AG04449 (cell line): ENCODE measurements at regions of chr15 and their contacts with region 1.

Region 1: GRCh38 chr15:57306161-57306943 is 70.0 kb upstream of the CGNL1 start:
- DNase-seq: no peak
- H3K4me3 ChIP-seq: peak overlapping the region; percentile 58
- CTCF ChIP-seq: peak; percentile 91

Region 2: GRCh38 chr15:56491110-56491722 is 815.1 kb before region 1 on chr15:
- CTCF ChIA-PET with region 1: interaction called, 34 read pairs
- POLR2A ChIA-PET with region 1: no interaction called
- DNase-seq: peak; percentile 36
- H3K4me3 ChIP-seq: no peak overlapping the region
- CTCF ChIP-seq: peak; percentile 91

Region 3: DNA sequence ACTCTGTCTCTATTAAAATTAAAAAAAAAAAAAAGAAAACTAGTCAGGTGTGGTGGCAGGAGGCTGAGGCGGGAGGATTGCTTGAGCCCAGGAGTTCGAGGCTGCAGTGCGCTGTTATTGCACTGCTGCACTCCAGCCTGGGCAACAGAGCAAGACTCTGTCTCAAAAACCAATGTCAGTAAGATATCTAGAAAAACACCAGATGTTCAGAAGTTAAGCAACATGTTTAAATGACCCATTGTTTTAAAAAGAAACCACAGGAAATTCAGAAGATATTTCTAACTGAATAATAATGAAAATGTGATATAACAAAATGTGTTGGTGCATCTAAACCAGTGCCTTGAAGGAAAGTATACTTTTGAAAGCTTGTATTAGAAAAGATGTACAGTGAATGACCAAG is 133.4 kb before region 1 on chr15:
- CTCF ChIA-PET with region 1: no interaction called
- POLR2A ChIA-PET with region 1: no interaction called
- DNase-seq: no peak
- H3K4me3 ChIP-seq: no peak overlapping the region
- CTCF ChIP-seq: no peak

Region 4: GRCh38 chr15:57278439-57278838 is 27.9 kb before region 1 on chr15:
- CTCF ChIA-PET with region 1: interaction called, 21 read pairs
- POLR2A ChIA-PET with region 1: no interaction called
- DNase-seq: no peak
- H3K4me3 ChIP-seq: no peak overlapping the region
- CTCF ChIP-seq: no peak

Region 5: GRCh38 chr15:57316451-57316850 is 10.1 kb after region 1 on chr15:
- CTCF ChIA-PET with region 1: interaction called, 15 read pairs
- POLR2A ChIA-PET with region 1: no interaction called
- DNase-seq: no peak
- H3K4me3 ChIP-seq: no peak overlapping the region
- CTCF ChIP-seq: no peak

Region 6: DNA sequence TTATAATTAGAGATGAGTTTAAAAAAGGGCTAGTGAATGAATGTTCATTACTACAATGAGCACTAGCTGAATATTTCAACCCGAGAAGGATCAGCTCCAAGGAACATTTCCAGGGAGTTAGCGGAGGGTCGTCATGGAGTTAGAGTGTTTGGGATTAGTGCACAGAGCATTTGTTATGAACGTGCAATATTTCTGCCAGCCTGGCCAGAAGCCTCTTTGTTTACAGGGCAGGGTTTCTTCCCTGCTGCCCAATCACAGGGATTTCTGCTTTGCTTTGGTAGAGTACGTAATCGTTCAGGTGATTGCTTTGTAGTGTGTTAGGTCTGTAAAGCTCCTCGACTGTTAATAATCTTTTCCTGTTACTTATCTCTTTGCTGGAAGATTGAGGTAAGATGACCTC is 75.9 kb after region 1 on chr15:
- CTCF ChIA-PET with region 1: no interaction called
- POLR2A ChIA-PET with region 1: no interaction called
- DNase-seq: no peak
- H3K4me3 ChIP-seq: no peak overlapping the region
- CTCF ChIP-seq: no peak

Region 7: GRCh38 chr15:57505949-57506391 is 199.6 kb after region 1 on chr15:
- CTCF ChIA-PET with region 1: no interaction called
- POLR2A ChIA-PET with region 1: no interaction called
- DNase-seq: no peak
- H3K4me3 ChIP-seq: no peak overlapping the region
- CTCF ChIP-seq: no peak

Region 8: DNA sequence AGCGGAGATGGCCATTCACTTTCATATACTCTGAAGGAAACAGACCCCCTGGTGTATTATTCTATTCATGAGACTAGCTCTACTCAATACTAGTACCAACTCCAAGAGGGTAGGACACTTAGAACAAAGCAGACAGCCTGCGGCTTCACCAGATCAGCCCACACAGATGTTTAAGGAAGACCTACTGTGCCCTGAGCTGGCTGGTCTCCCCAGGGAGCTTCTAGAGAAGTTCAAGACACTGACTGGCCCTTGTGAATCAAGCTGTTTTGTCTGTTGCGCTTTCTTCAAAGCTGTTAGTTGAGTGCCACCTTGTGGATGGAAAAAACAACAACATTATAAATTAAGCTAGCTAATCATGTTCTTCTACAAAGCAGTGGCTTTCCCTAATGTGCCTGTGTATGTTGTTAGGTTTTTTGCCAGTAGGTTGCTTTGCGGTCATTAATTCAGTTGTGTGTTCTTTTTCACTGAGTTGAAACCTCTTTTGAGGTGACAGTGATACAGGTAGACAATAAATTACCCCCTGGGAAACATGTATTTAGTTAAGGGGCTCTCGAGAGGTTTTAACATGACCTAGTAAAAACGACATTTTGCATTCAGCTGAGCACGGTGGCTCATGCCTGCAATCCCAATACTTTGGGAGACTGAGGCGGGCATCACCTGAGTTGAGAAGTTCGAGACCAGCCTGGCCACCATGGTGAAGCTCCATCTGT is 221.2 kb after region 1 on chr15:
- CTCF ChIA-PET with region 1: interaction called, 29 read pairs
- POLR2A ChIA-PET with region 1: no interaction called
- DNase-seq: peak; percentile 65
- H3K4me3 ChIP-seq: no peak overlapping the region
- CTCF ChIP-seq: peak; percentile 42